Right ventricle myocardium inferior (tissue), 1 donor: ENCODE measurements at regions of chr5 and their contacts with region 1.

Region 1: DNA sequence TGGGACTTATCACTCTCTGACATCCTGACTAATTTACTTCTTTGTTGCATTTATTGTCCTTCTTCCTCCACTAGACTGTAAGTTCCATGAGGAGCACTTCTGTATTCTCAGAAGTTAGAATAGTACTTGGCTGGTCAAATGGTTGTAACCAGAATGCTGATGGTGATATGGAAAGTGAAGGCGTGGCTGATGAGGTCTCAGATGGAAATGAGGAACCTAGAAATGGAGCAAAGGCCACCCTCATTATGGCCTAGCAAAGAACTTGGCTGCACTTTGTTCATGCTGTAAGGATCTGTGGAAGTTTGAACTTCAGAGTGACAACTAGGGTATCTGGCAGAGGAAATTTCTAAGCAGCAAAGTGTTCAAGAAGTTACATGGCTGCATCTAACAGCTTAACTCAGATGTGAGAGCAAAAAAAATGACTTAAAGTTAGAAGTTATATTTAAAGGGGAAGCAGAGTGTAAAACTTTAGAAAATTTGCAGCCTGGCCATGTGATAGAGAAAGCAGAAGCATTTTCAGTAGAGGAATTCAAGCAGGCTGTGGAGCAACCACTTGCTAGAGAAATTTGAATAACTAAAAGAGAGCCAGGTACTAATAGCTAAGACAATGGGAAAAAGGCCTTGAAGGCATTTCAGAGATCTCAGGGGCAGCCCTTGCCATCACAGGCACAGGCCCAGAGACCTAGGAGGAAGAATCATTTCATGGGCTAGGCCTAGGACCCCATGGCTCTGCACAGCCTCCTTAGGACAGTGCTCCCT is 14.9 kb upstream of the SLC22A5 start:
- DNase-seq: no peak
- ATAC-seq: no peak

Region 2: GRCh38 chr5:132215329-132215728 is 139.2 kb before region 1 on chr5:
- intact Hi-C with region 1: loop called (anchors 10 kb)
- DNase-seq: peak; percentile 95
- ATAC-seq: peak; percentile 93

Region 3: DNA sequence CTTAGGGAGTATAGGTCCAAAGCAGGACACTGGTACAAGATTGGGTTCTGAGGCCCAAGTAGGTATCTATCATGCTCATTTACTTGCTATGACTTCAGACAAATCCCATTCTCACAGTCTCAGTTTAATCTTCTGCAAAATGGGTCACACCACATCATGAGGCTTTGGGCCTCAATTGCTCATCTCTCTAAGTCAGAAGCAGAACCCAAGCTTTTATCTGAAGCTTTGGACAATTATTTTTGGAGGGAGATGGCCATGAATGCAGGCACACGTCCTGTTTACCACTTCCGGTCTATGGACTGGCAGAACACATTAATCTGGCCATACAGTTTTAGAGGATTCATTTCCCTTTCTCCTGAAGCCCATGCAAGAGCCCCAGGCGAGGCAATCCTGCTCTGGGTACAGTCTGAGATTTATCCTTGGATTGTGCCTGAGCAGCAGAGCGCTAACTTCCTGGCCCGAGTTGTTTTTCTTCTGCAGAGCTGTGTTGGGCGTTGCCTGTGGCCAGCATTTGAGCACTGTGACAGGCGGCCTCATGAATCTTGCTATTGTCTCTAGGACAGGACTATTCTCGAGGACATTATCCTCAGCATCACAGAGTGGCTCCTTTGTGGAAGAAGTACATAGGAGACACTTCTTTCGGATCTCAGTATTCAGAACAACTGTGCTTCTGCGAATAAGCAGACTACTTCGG is 44.3 kb before region 1 on chr5:
- intact Hi-C with region 1: no loop called
- DNase-seq: no peak
- ATAC-seq: peak; percentile 14